ENCODE measurements at regions of chrX and their contacts with region 1.

Region 1: GRCh38 chrX:79107891-79108718 is 36.4 kb upstream of the GPR174 start:
- DNase-seq: no peak
- ATAC-seq: peak; percentile 83
- H3K4me3 Mint-ChIP-seq: peak overlapping the region; percentile 68
- H3K27ac Mint-ChIP-seq: peak overlapping the region; percentile 88
- H3K4me1 Mint-ChIP-seq: peaks cover 38% of the 10 kb centered on the region
- H3K27me3 Mint-ChIP-seq: no peaks in the 10 kb centered on the region

Region 2: GRCh38 chrX:78997870-78998558 is 110.1 kb before region 1 on chrX:
- POLR2A ChIA-PET with region 1: no interaction called
- DNase-seq: peak; percentile 42
- ATAC-seq: peak; percentile 76
- H3K4me3 Mint-ChIP-seq: peak overlapping the region; percentile 17
- H3K27ac Mint-ChIP-seq: peak overlapping the region; percentile 50
- H3K4me1 Mint-ChIP-seq: peaks cover 6% of the 10 kb centered on the region
- H3K27me3 Mint-ChIP-seq: no peaks in the 10 kb centered on the region

Region 3: DNA sequence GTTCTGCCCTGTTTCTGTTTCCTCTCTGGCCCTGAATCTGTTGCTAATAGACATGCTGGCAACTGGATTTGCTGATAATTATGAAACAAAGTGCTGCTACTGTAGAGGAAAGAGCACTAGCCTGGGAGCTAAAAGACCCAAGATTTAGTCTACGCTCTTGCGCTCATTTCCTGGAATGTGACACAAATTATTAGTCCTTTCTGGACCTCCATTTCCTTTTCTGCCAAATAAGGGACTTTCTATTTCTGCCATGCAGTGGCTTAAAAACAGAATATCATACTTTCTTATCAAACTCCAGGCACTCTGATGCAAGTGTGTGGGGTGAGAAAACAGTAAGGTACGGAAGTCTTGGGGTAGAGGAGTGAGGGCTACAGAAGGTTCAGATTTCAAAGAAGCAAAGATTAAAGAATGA is 12.0 kb before region 1 on chrX:
- POLR2A ChIA-PET with region 1: interaction called, 13 read pairs
- DNase-seq: no peak
- ATAC-seq: peak; percentile 83
- H3K4me3 Mint-ChIP-seq: peak overlapping the region; percentile 73
- H3K27ac Mint-ChIP-seq: peak overlapping the region; percentile 93
- H3K4me1 Mint-ChIP-seq: peaks cover 45% of the 10 kb centered on the region
- H3K27me3 Mint-ChIP-seq: no peaks in the 10 kb centered on the region

Region 4: GRCh38 chrX:79138658-79139241 is 30.6 kb after region 1 on chrX:
- POLR2A ChIA-PET with region 1: interaction called, 22 read pairs
- DNase-seq: no peak
- ATAC-seq: peak; percentile 71
- H3K4me3 Mint-ChIP-seq: peak overlapping the region; percentile 68
- H3K27ac Mint-ChIP-seq: peak overlapping the region; percentile 88
- H3K4me1 Mint-ChIP-seq: peaks cover 35% of the 10 kb centered on the region
- H3K27me3 Mint-ChIP-seq: no peaks in the 10 kb centered on the region

Region 5: GRCh38 chrX:79146640-79147390 is 38.7 kb after region 1 on chrX:
- POLR2A ChIA-PET with region 1: interaction called, 22 read pairs
- DNase-seq: no peak
- ATAC-seq: peak; percentile 46
- H3K4me3 Mint-ChIP-seq: peak overlapping the region; percentile 87
- H3K27ac Mint-ChIP-seq: peak overlapping the region; percentile 91
- H3K4me1 Mint-ChIP-seq: peaks cover 32% of the 10 kb centered on the region
- H3K27me3 Mint-ChIP-seq: no peaks in the 10 kb centered on the region

Measured in activated naive CD8-positive, alpha-beta T cell treated with anti-CD3 and anti-CD28 coated beads, Interleukin-2, amount 10 ng/mL, durations not matched to agents 7 days and 5 days (primary cell).